Activated CD4-positive, alpha-beta memory T cell treated with anti-CD3 and anti-CD28 coated beads for 36 hours (primary cell): ENCODE measurements at regions of chr16 and their contacts with region 1.

Region 1: GRCh38 chr16:4253394-4254150 is 11.7 kb upstream of the SRL start:
- DNase-seq: peak; percentile 100
- H3K4me3 Mint-ChIP-seq: peak overlapping the region; percentile 97
- H3K27ac Mint-ChIP-seq: peak overlapping the region; percentile 96
- H3K4me1 Mint-ChIP-seq: peaks cover 5% of the 10 kb centered on the region
- H3K27me3 Mint-ChIP-seq: no peaks in the 10 kb centered on the region

Region 2: GRCh38 chr16:3717235-3718018 is 536.1 kb before region 1 on chr16 and contains the start of gene TRAP1:
- CTCF ChIA-PET with region 1: no interaction called
- POLR2A ChIA-PET with region 1: interaction called, 3 read pairs
- intact Hi-C with region 1: loop called (anchors 10 kb)
- DNase-seq: peak; percentile 94
- H3K4me3 Mint-ChIP-seq: peak within 1 kb of the TSS; percentile 93
- H3K27ac Mint-ChIP-seq: peak within 1 kb of the TSS; percentile 83
- H3K4me1 Mint-ChIP-seq: peaks cover 33% of the 10 kb centered on the region
- H3K27me3 Mint-ChIP-seq: no peaks in the 10 kb centered on the region
- total RNA-seq, gene TRAP1: 277 to 282 TPM

Region 3: DNA sequence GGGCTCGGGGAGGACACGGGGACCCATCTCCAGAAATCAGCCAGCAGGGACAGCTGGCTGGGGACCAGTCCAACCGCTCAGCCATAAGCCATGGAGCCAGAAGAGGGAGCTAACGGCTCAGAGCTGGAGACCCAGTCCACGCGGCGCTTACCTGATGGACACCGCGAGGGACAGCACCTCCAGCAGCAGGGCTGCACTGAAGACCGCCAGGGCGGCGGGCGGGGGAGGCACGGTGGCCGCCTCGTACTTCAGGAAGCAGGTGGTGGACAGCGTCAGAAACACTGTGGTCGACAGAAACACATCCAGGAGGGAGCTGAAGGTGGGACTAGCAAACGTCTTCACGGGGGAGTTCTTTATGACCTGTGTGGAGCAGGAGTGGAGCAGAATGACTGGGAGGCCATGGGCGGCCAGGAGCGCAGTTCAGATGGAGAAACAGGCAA is 270.5 kb before region 1 on chr16:
- CTCF ChIA-PET with region 1: interaction called, 46 read pairs
- POLR2A ChIA-PET with region 1: no interaction called
- intact Hi-C with region 1: loop called (anchors 5 kb)
- DNase-seq: peak; percentile 66
- H3K4me3 Mint-ChIP-seq: no peak overlapping the region
- H3K27ac Mint-ChIP-seq: no peak overlapping the region
- H3K4me1 Mint-ChIP-seq: peaks cover 3% of the 10 kb centered on the region
- H3K27me3 Mint-ChIP-seq: no peaks in the 10 kb centered on the region

Region 4: DNA sequence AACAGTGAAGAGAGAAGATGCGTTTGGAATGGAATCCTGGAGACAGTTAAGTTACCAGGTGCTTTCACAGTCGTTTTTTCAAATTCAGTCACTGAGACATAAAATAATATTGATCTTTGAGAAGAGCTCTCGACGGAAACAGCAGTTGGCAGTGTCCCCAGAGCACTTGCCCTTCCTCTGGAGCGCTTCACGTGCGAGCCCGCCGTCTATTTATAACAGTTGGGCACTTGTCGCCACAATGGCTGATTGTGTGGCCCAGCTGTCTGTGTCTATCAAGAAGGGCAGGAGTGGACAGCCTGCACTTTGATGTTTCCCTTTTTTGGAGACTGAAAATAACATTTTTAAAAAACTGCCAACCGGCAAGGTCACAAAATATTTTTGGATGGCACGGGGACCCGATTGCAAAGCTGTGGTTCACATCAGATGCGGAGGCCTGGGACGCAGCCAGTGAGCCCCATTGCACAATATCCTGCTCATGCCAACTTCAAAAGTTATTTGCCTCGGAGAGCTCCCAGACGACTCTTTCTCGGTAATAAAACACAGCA is 200.2 kb before region 1 on chr16:
- CTCF ChIA-PET with region 1: no interaction called
- POLR2A ChIA-PET with region 1: no interaction called
- intact Hi-C with region 1: no loop called
- DNase-seq: no peak
- H3K4me3 Mint-ChIP-seq: no peak overlapping the region
- H3K27ac Mint-ChIP-seq: no peak overlapping the region
- H3K4me1 Mint-ChIP-seq: no peaks in the 10 kb centered on the region
- H3K27me3 Mint-ChIP-seq: no peaks in the 10 kb centered on the region

Region 5: GRCh38 chr16:4183237-4184036 is 70.1 kb before region 1 on chr16:
- CTCF ChIA-PET with region 1: interaction called, 7 read pairs
- POLR2A ChIA-PET with region 1: interaction called, 9 read pairs
- intact Hi-C with region 1: loop called (anchors 1 kb)
- DNase-seq: peak; percentile 95
- H3K4me3 Mint-ChIP-seq: peak overlapping the region; percentile 76
- H3K27ac Mint-ChIP-seq: peak overlapping the region; percentile 69
- H3K4me1 Mint-ChIP-seq: peaks cover 3% of the 10 kb centered on the region
- H3K27me3 Mint-ChIP-seq: peaks cover 4% of the 10 kb centered on the region

Region 6: GRCh38 chr16:4271176-4272066 is 17.8 kb after region 1 on chr16:
- CTCF ChIA-PET with region 1: interaction called, 57 read pairs
- POLR2A ChIA-PET with region 1: interaction called, 48 read pairs
- intact Hi-C with region 1: loop called (anchors 1 kb)
- DNase-seq: peak; percentile 94
- H3K4me3 Mint-ChIP-seq: peak overlapping the region; percentile 86
- H3K27ac Mint-ChIP-seq: peak overlapping the region; percentile 93
- H3K4me1 Mint-ChIP-seq: peaks cover 14% of the 10 kb centered on the region
- H3K27me3 Mint-ChIP-seq: no peaks in the 10 kb centered on the region

Region 7: GRCh38 chr16:4330277-4330874 is 76.8 kb after region 1 on chr16:
- CTCF ChIA-PET with region 1: interaction called, 14 read pairs
- POLR2A ChIA-PET with region 1: interaction called, 6 read pairs
- intact Hi-C with region 1: no loop called
- DNase-seq: peak; percentile 79
- H3K4me3 Mint-ChIP-seq: no peak overlapping the region
- H3K27ac Mint-ChIP-seq: no peak overlapping the region
- H3K4me1 Mint-ChIP-seq: peaks cover 6% of the 10 kb centered on the region
- H3K27me3 Mint-ChIP-seq: no peaks in the 10 kb centered on the region

Region 8: GRCh38 chr16:4358831-4359561 is 105.4 kb after region 1 on chr16:
- CTCF ChIA-PET with region 1: no interaction called
- POLR2A ChIA-PET with region 1: no interaction called
- intact Hi-C with region 1: no loop called
- DNase-seq: peak; percentile 71
- H3K4me3 Mint-ChIP-seq: no peak overlapping the region
- H3K27ac Mint-ChIP-seq: no peak overlapping the region
- H3K4me1 Mint-ChIP-seq: no peaks in the 10 kb centered on the region
- H3K27me3 Mint-ChIP-seq: no peaks in the 10 kb centered on the region

Region 9: GRCh38 chr16:4402439-4403132 is 149.0 kb after region 1 on chr16:
- CTCF ChIA-PET with region 1: interaction called, 11 read pairs
- POLR2A ChIA-PET with region 1: no interaction called
- intact Hi-C with region 1: no loop called
- DNase-seq: peak; percentile 74
- H3K4me3 Mint-ChIP-seq: no peak overlapping the region
- H3K27ac Mint-ChIP-seq: no peak overlapping the region
- H3K4me1 Mint-ChIP-seq: no peaks in the 10 kb centered on the region
- H3K27me3 Mint-ChIP-seq: no peaks in the 10 kb centered on the region